Activated T-helper 1 cell treated with anti-CD3 and anti-CD28 coated beads, Interleukin-12 subunit alpha, Interleukin-12 subunit beta, Interleukin-2, Interleukin-4 antibody, amounts not matched to agents 30 ng/mL and 10 ng/mL and 1 ng/mL, durations not matched to agents 14 hours and 24 hours and 36 hours (primary cell): ENCODE measurements at regions of chr19 and their contacts with region 1.

Region 1: GRCh38 chr19:17266975-17267788 is at the start of gene BABAM1:
- DNase-seq: peak; percentile 96
- H3K4me3 Mint-ChIP-seq: peak within 1 kb of the TSS; percentile 89
- H3K27ac Mint-ChIP-seq: peak within 1 kb of the TSS; percentile 96
- H3K4me1 Mint-ChIP-seq: peaks cover 16% of the 10 kb centered on the region
- H3K27me3 Mint-ChIP-seq: no peaks in the 10 kb centered on the region
- total RNA-seq, gene BABAM1: 114 and 120 TPM in 2 replicates

Region 2: GRCh38 chr19:16572332-16573211 is 694.6 kb before region 1 on chr19 and contains the start of gene SLC35E1:
- intact Hi-C with region 1: loop called (anchors 1 kb)
- DNase-seq: peak; percentile 91
- H3K4me3 Mint-ChIP-seq: peak within 1 kb of the TSS; percentile 98
- H3K27ac Mint-ChIP-seq: peak within 1 kb of the TSS; percentile 97
- H3K4me1 Mint-ChIP-seq: peaks cover 58% of the 10 kb centered on the region
- H3K27me3 Mint-ChIP-seq: no peaks in the 10 kb centered on the region
- total RNA-seq, gene SLC35E1: 60.4 and 61.7 TPM in 2 replicates

Region 3: GRCh38 chr19:17215125-17215971 is 51.8 kb before region 1 on chr19 and contains the start of gene USE1:
- intact Hi-C with region 1: loop called (anchors 1 kb)
- DNase-seq: peak; percentile 82
- H3K4me3 Mint-ChIP-seq: peak within 1 kb of the TSS; percentile 91
- H3K27ac Mint-ChIP-seq: peak within 1 kb of the TSS; percentile 99
- H3K4me1 Mint-ChIP-seq: peaks cover 11% of the 10 kb centered on the region
- H3K27me3 Mint-ChIP-seq: no peaks in the 10 kb centered on the region
- total RNA-seq, gene USE1: 34.6 and 36.0 TPM in 2 replicates

Region 4: DNA sequence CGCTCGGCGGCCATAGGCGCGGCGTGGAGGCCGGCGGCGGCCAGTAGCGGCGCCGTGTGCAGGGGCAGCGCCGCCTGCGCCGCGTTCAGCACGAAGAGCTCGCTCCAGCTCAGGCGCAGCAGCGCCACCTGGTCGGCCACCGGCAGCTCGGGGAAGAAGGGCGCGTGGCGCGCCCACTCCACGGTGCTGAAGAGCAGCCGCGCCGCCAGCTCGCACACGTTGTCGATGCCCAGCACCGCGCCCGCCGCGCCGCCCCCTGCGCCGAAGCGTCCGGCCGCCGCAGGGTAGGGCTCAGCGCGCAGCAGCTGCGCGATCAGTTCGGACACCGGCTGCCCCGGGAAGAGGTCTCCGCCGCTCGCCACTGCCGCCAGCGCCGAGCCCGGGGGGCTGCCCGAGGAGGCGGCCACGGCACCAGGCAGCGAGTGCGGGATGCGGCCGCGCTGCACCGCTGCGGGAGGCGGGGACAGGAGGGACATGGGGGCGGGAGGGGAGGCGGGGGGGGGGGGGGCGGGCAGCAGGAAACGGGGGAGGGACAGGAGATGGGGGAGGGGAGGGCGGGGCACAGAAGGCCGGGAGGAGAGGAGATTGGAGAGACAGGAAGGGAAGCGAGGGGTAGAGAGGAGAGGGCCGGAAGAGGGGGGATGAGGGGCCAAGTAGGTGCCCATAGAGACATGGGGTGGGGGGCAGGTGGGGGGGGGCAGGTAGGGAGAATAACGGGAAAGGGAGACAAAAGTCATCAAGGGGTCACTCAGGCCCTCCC is 31.4 kb before region 1 on chr19:
- intact Hi-C with region 1: loop called (anchors 2 kb)
- DNase-seq: peak; percentile 75
- H3K4me3 Mint-ChIP-seq: peak overlapping the region; percentile 85
- H3K27ac Mint-ChIP-seq: peak overlapping the region; percentile 79
- H3K4me1 Mint-ChIP-seq: peaks cover 13% of the 10 kb centered on the region
- H3K27me3 Mint-ChIP-seq: no peaks in the 10 kb centered on the region

Region 5: GRCh38 chr19:17282488-17283255 is 15.5 kb after region 1 on chr19:
- intact Hi-C with region 1: loop called (anchors 1 kb)
- DNase-seq: peak; percentile 72
- H3K4me3 Mint-ChIP-seq: peak overlapping the region; percentile 89
- H3K27ac Mint-ChIP-seq: peak overlapping the region; percentile 58
- H3K4me1 Mint-ChIP-seq: peaks cover 4% of the 10 kb centered on the region
- H3K27me3 Mint-ChIP-seq: no peaks in the 10 kb centered on the region

Region 6: DNA sequence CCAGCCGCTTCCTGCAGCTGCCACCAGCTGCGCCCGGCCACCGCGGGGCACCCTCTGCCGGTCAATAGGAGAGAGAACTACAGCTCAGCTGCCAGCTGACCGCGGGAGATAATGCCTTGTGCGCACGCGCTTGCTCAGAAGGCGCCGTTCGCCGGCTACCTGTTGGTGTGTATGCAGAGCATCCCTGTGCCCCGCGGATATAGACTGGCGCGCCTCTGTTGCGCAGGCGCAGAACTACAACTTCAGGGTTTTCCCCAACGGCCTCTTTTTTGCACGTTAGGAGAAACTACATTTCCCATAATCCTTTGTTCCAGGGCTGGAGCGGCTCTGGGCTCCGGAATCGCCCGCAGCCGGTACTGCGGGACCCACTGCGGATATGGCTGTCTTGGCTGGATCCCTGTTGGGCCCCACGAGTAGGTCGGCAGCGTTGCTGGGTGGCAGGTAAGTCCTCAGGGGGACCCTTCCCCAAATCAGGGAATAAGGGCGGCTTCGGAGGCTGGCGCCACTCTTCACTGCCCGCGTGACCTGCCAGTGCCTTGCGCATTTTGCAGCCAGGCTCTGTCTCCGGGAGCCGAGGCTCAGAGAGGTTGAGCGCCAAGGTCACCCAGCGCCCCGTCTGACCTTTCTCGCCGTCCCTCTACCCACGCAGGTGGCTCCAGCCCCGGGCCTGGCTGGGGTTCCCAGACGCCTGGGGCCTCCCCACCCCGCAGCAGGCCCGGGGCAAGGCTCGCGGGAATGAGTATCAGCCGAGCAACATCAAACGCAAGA is 38.5 kb after region 1 on chr19 and contains the start of gene MRPL34:
- intact Hi-C with region 1: loop called (anchors 1 kb)
- DNase-seq: peak; percentile 94
- H3K4me3 Mint-ChIP-seq: peak within 1 kb of the TSS; percentile 90
- H3K27ac Mint-ChIP-seq: peak within 1 kb of the TSS; percentile 91
- H3K4me1 Mint-ChIP-seq: peaks cover 45% of the 10 kb centered on the region
- H3K27me3 Mint-ChIP-seq: no peaks in the 10 kb centered on the region
- total RNA-seq, gene MRPL34: 108 and 118 TPM in 2 replicates

Region 7: GRCh38 chr19:17390665-17391370 is 123.6 kb after region 1 on chr19:
- intact Hi-C with region 1: loop called (anchors 1 kb)
- DNase-seq: peak; percentile 88
- H3K4me3 Mint-ChIP-seq: peak overlapping the region; percentile 90
- H3K27ac Mint-ChIP-seq: peak overlapping the region; percentile 29
- H3K4me1 Mint-ChIP-seq: peaks cover 20% of the 10 kb centered on the region
- H3K27me3 Mint-ChIP-seq: peaks cover 21% of the 10 kb centered on the region